T-cell (primary cell): ENCODE measurements at regions of chr2 and their contacts with region 1.

Region 1: DNA sequence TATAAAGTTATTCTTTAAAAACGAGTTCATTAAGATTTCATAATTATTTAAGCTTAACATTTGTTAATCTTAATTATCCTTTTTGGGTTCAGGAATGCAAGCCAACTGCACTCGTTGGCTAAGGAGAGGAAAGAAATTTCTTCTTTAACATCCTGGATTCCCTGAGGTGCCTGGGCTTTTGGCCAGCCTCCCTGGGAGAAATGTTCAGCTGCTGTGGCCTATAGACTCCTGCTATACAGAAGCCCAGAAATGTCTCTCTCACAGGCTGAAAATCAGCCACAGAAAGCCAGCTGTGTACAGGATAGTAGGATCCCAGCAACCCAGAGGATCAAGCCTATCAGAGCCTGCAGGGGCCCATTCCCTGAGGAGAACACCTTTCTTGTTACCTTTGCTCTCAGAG is 430.3 kb downstream of the XIRP2 start:
- DNase-seq: no peak
- ATAC-seq: no peak
- H3K4me3 ChIP-seq: no peak overlapping the region
- H3K4me3 Mint-ChIP-seq: no peak overlapping the region
- H3K27ac ChIP-seq: no peak overlapping the region
- H3K27ac Mint-ChIP-seq: no peak overlapping the region
- H3K4me1 ChIP-seq: no peaks in the 10 kb centered on the region
- H3K4me1 Mint-ChIP-seq: no peaks in the 10 kb centered on the region
- H3K27me3 ChIP-seq: no peaks in the 10 kb centered on the region
- H3K27me3 Mint-ChIP-seq: peaks cover 4 to 8% of the 10 kb centered on the region in 2 donors

Region 2: GRCh38 chr2:167052825-167053224 is 265.8 kb before region 1 on chr2:
- CTCF ChIA-PET with region 1: no interaction called
- POLR2A ChIA-PET with region 1: no interaction called
- DNase-seq: no peak
- ATAC-seq: no peak
- H3K4me3 ChIP-seq: no peak overlapping the region
- H3K4me3 Mint-ChIP-seq: no peak overlapping the region
- H3K27ac ChIP-seq: no peak overlapping the region
- H3K27ac Mint-ChIP-seq: no peak overlapping the region
- H3K4me1 ChIP-seq: no peaks in the 10 kb centered on the region
- H3K4me1 Mint-ChIP-seq: no peaks in the 10 kb centered on the region
- H3K27me3 ChIP-seq: no peaks in the 10 kb centered on the region
- H3K27me3 Mint-ChIP-seq: no peaks in the 10 kb centered on the region

Region 3: GRCh38 chr2:167264380-167264779 is 54.2 kb before region 1 on chr2:
- CTCF ChIA-PET with region 1: no interaction called
- POLR2A ChIA-PET with region 1: no interaction called
- DNase-seq: no peak
- ATAC-seq: no peak
- H3K4me3 ChIP-seq: no peak overlapping the region
- H3K4me3 Mint-ChIP-seq: no peak overlapping the region
- H3K27ac ChIP-seq: no peak overlapping the region
- H3K27ac Mint-ChIP-seq: no peak overlapping the region
- H3K4me1 ChIP-seq: no peaks in the 10 kb centered on the region
- H3K4me1 Mint-ChIP-seq: no peaks in the 10 kb centered on the region
- H3K27me3 ChIP-seq: no peaks in the 10 kb centered on the region
- H3K27me3 Mint-ChIP-seq: no peaks in the 10 kb centered on the region

Region 4: GRCh38 chr2:167292430-167293171 is 26.0 kb before region 1 on chr2:
- CTCF ChIA-PET with region 1: no interaction called
- POLR2A ChIA-PET with region 1: no interaction called
- DNase-seq: peak in 27 of 35 experiments; percentile 6 to 52 (median 25)
- ATAC-seq: peak; percentile 72 to 91 (median 82)
- H3K4me3 ChIP-seq: peak within 1 kb of the TSS; percentile 34 to 75
- H3K4me3 Mint-ChIP-seq: peak within 1 kb of the TSS; percentile 66 to 92 (median 69)
- H3K27ac ChIP-seq: no peak within 1 kb of the TSS
- H3K27ac Mint-ChIP-seq: peak within 1 kb of the TSS in 1 of 2 donors; percentile 50
- H3K4me1 ChIP-seq: peaks cover 10 to 18% of the 10 kb centered on the region in 2 experiments
- H3K4me1 Mint-ChIP-seq: peaks cover 15 to 22% (median 20%) of the 10 kb centered on the region in 3 donors
- H3K27me3 ChIP-seq: peaks cover 6 to 21% of the 10 kb centered on the region in 2 experiments
- H3K27me3 Mint-ChIP-seq: peaks cover 16 to 42% of the 10 kb centered on the region in 2 donors

Region 5: GRCh38 chr2:167406558-167406957 is 88.0 kb after region 1 on chr2:
- CTCF ChIA-PET with region 1: interaction called in 1 of 2 experiments, 11 read pairs
- POLR2A ChIA-PET with region 1: no interaction called
- DNase-seq: no peak
- ATAC-seq: no peak
- H3K4me3 ChIP-seq: no peak overlapping the region
- H3K4me3 Mint-ChIP-seq: no peak overlapping the region
- H3K27ac ChIP-seq: no peak overlapping the region
- H3K27ac Mint-ChIP-seq: no peak overlapping the region
- H3K4me1 ChIP-seq: no peaks in the 10 kb centered on the region
- H3K4me1 Mint-ChIP-seq: no peaks in the 10 kb centered on the region
- H3K27me3 ChIP-seq: no peaks in the 10 kb centered on the region
- H3K27me3 Mint-ChIP-seq: no peaks in the 10 kb centered on the region